Natural killer cell (primary cell): ENCODE measurements at regions of chrX and their contacts with region 1.

Region 1: DNA sequence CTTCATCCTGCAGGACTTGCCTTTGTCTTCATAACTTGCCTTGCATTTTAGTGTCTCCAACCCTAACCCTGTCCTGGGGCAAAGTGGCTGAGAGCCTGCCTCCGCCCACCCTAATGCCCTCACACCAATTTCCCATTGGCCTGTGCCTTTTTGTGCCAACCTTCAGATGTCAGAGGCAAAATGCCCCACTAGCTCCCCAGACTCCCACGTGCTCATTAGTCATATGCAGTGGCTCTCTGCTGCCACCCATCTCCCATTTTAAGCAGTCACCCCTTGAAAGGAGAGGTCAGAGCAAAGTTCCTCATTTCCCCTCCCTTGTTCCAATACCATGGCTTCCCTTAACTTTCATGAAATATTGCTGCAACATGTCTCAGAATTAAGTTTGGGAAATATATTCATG is 74.8 kb upstream of the PASD1 start:
- DNase-seq: peak; percentile 17 to 45
- ATAC-seq: peak; percentile 44 to 76 (median 64)
- H3K4me3 ChIP-seq: no peak overlapping the region
- H3K4me3 Mint-ChIP-seq: no peak overlapping the region
- H3K27ac ChIP-seq: no peak overlapping the region
- H3K27ac Mint-ChIP-seq: peak overlapping the region in 1 of 2 donors; percentile 64
- H3K4me1 ChIP-seq: no peaks in the 10 kb centered on the region
- H3K4me1 Mint-ChIP-seq: peaks cover 0 to 7% of the 10 kb centered on the region in 2 donors
- H3K27me3 ChIP-seq: no peaks in the 10 kb centered on the region
- H3K27me3 Mint-ChIP-seq: peaks cover 0 to 4% of the 10 kb centered on the region in 2 donors
- CTCF ChIP-seq: peak; percentile 50

Region 2: DNA sequence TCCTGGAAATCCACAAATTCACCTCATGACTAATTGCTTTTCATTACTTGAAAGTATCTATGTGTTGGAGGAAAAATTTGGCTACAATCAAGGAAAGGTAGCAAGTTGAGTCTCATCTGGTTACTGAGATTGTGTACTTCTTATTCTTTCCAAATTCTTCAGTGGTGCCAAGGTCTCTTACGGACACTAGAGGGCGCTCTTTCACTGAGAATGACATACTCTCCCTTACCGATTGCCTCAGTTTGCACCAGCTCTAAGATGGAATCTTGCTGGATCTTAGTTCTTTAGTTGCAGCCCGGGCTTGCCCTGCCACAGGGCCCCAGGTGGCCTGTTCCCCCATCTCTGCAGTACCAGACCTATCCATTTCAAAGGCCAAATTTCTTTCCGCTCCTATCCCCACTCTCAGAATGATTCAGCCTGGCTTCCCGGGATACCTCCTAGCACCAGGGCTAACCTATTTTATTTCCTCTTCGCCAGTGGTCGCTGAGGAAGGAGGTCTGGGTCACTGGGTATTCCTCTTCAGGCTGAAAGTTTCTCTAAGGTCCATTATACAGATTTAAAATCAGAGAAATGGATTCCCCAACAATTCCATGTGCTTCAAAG is 336.9 kb before region 1 on chrX:
- intact Hi-C with region 1: loop called (anchors 1 kb)
- DNase-seq: peak in 1 of 2 donors; percentile 77
- ATAC-seq: peak in 1 of 3 donors; percentile 80
- H3K4me3 ChIP-seq: no peak overlapping the region
- H3K4me3 Mint-ChIP-seq: no peak overlapping the region
- H3K27ac ChIP-seq: no peak overlapping the region
- H3K27ac Mint-ChIP-seq: no peak overlapping the region
- H3K4me1 ChIP-seq: no peaks in the 10 kb centered on the region
- H3K4me1 Mint-ChIP-seq: no peaks in the 10 kb centered on the region
- H3K27me3 ChIP-seq: no peaks in the 10 kb centered on the region
- H3K27me3 Mint-ChIP-seq: peaks cover 8 to 41% of the 10 kb centered on the region in 2 donors
- CTCF ChIP-seq: peak; percentile 75

Region 3: DNA sequence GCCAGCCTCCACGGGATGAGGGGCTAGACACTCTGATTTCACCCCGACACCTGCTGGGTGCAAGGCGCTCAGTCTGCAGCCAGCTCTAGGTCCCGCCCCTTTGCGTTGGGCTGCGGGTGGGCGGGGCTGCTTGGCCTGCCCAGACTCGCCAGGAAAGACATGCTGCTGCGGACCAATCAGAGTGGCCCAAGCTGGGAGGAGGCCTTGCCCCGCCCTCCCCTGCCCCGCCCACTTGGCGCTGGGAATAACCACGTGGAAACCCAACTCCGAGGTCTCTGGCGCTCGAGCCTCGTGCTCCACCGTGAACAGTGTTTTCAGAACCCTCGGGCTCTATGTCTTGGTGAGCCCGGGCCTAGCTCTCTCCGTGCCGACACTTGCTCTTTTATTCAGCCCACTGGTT is 97.0 kb before region 1 on chrX:
- intact Hi-C with region 1: loop called (anchors 1 kb)
- DNase-seq: no peak
- ATAC-seq: no peak
- H3K4me3 ChIP-seq: no peak overlapping the region
- H3K4me3 Mint-ChIP-seq: no peak overlapping the region
- H3K27ac ChIP-seq: no peak overlapping the region
- H3K27ac Mint-ChIP-seq: no peak overlapping the region
- H3K4me1 ChIP-seq: peaks cover 36% of the 10 kb centered on the region
- H3K4me1 Mint-ChIP-seq: peaks cover 21 to 31% of the 10 kb centered on the region in 2 donors
- H3K27me3 ChIP-seq: no peaks in the 10 kb centered on the region
- H3K27me3 Mint-ChIP-seq: no peaks in the 10 kb centered on the region
- CTCF ChIP-seq: no peak

Region 4: DNA sequence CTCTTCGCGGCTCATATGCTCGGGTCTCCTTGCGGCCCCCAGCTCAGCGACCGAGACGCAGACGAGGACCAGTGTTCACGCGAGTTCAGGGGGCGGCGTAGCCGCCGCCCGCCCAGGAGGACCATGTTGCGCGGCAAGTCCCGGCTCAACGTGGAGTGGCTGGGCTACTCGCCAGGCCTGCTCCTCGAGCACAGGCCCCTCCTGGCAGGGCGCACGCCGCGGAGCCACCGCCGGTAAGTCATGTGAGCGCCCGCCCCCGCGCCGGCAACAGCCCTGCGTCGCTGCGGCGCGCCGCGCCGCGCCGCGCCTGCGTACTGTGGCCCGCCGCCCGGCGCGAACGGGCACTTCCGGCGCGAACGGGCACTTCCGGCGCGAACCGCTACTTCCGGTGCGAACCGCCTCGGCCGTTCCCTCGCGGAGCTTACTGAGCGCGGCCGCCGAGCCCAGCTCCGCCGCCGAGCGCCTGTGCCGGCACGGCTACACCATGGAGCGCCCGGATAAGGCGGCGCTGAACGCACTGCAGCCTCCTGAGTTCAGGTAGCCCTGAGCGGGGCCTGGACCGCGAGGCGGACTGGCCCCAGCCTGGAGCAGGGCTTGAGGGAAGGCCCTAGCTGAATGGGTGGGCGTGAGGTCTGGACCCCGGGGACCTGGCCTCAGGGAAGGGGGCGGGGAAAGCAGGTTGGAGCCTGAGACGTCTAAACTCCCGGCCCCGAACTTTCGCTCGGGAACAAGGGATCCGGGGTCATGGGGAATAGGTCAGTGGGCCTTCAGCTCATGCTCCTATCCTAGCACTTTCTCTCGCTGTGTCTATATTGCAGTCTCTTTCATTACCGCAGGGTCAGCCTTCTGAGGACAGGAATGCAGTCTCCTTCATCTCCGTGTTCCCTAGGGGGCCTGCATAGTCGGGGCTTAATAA is 91.6 kb before region 1 on chrX and contains the start of gene VMA21:
- intact Hi-C with region 1: loop called (anchors 1 kb)
- DNase-seq: peak; percentile 80 to 89
- ATAC-seq: peak; percentile 76 to 91 (median 83)
- H3K4me3 ChIP-seq: peak within 1 kb of the TSS; percentile 87
- H3K4me3 Mint-ChIP-seq: peak within 1 kb of the TSS; percentile 89
- H3K27ac ChIP-seq: peak within 1 kb of the TSS; percentile 99
- H3K27ac Mint-ChIP-seq: peak within 1 kb of the TSS; percentile 94 to 97
- H3K4me1 ChIP-seq: peaks cover 49% of the 10 kb centered on the region
- H3K4me1 Mint-ChIP-seq: peaks cover 54 to 58% of the 10 kb centered on the region in 2 donors
- H3K27me3 ChIP-seq: no peaks in the 10 kb centered on the region
- H3K27me3 Mint-ChIP-seq: no peaks in the 10 kb centered on the region
- CTCF ChIP-seq: no peak
- total RNA-seq, gene VMA21: 20.0 to 21.9 (median 21.4) TPM